HCT116 (cell line): ENCODE measurements at regions of chr20 and their contacts with region 1.

Region 1: GRCh38 chr20:17536944-17537444 is 5.8 kb upstream of the BFSP1 start:
- DNase-seq: peak; percentile 64
- ATAC-seq: peak; percentile 95
- H3K4me3 ChIP-seq: no peak overlapping the region
- H3K27ac ChIP-seq: no peak overlapping the region
- H3K4me1 ChIP-seq: peaks cover 34 to 41% of the 10 kb centered on the region in 2 experiments
- H3K27me3 ChIP-seq: no peaks in the 10 kb centered on the region
- CTCF ChIP-seq: peak; percentile 87 to 97 (median 97)
- POLR2A ChIP-seq: no peak
- RAD21 ChIP-seq: peak; percentile 99

Region 2: DNA sequence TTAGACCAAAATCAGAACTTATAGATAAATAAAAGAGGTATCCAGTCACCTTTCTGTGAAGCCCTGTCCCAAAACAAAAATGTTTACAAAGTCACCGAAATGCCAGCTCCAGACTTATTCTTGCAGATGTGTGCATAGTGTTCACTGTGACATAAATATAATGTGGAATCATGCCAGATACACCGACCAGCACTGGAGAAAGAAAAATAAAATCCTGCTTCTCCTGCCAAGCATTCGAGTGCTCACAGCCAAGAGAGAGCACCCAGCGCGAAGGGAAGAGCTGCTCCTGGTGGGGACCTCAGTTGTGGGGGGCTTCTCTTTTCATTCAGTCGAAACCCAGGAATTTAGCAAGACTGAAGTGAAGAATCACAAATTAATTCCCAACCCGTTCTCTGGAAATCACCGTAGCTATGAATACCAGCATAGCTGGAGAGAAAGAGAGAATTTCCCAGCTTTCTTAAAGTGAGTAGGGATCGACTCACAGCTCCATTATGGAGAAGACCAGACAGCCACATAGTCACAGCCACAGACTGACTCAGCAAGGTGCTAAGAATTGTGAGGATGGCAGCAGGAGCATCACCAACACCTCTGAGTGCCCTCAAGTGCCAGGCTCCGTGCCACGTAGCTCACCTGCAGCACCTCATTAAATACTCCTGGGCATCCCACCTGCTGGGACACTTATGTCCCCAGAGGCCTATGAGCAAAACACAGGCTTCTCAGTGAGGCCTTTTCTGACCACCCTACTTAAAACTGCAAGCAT is 39.0 kb before region 1 on chr20:
- CTCF ChIA-PET with region 1: no interaction called
- POLR2A ChIA-PET with region 1: no interaction called
- RAD21 ChIA-PET with region 1: no interaction called
- intact Hi-C with region 1: no loop called
- DNase-seq: no peak
- ATAC-seq: 0 out of 2 replicates have a peak, but pooled peaks have one; percentile 20
- H3K4me3 ChIP-seq: no peak overlapping the region
- H3K27ac ChIP-seq: no peak overlapping the region
- H3K4me1 ChIP-seq: no peaks in the 10 kb centered on the region
- H3K27me3 ChIP-seq: no peaks in the 10 kb centered on the region
- CTCF ChIP-seq: no peak
- POLR2A ChIP-seq: no peak
- RAD21 ChIP-seq: no peak

Region 3: GRCh38 chr20:17569616-17570346 is 32.8 kb after region 1 on chr20 and contains the start of gene DSTN:
- CTCF ChIA-PET with region 1: interaction called, 4 read pairs
- POLR2A ChIA-PET with region 1: interaction called, 6 read pairs
- RAD21 ChIA-PET with region 1: interaction called in 1 of 2 experiments, 4 read pairs
- intact Hi-C with region 1: loop called (anchors 1 kb)
- DNase-seq: peak; percentile 78
- ATAC-seq: peak; percentile 77
- H3K4me3 ChIP-seq: peak within 1 kb of the TSS; percentile 71 to 90
- H3K27ac ChIP-seq: peak within 1 kb of the TSS; percentile 98
- H3K4me1 ChIP-seq: peaks cover 37 to 53% of the 10 kb centered on the region in 2 experiments
- H3K27me3 ChIP-seq: no peaks in the 10 kb centered on the region
- CTCF ChIP-seq: no peak
- POLR2A ChIP-seq: peak; percentile 63
- RAD21 ChIP-seq: no peak
- total RNA-seq, gene DSTN: 202 TPM

Region 4: GRCh38 chr20:17611540-17612286 is 74.7 kb after region 1 on chr20:
- CTCF ChIA-PET with region 1: interaction called, 10 read pairs
- POLR2A ChIA-PET with region 1: no interaction called
- RAD21 ChIA-PET with region 1: no interaction called
- intact Hi-C with region 1: no loop called
- DNase-seq: peak; percentile 6
- ATAC-seq: peak; percentile 26
- H3K4me3 ChIP-seq: no peak overlapping the region
- H3K27ac ChIP-seq: peak overlapping the region; percentile 40; the same call in 1 of the 2 replicates
- H3K4me1 ChIP-seq: no peaks in the 10 kb centered on the region
- H3K27me3 ChIP-seq: no peaks in the 10 kb centered on the region
- CTCF ChIP-seq: peak; percentile 32 to 54 (median 48); a peak in 4 of 6 replicates
- POLR2A ChIP-seq: no peak
- RAD21 ChIP-seq: no peak; the same call in none of the 2 replicates

Region 5: DNA sequence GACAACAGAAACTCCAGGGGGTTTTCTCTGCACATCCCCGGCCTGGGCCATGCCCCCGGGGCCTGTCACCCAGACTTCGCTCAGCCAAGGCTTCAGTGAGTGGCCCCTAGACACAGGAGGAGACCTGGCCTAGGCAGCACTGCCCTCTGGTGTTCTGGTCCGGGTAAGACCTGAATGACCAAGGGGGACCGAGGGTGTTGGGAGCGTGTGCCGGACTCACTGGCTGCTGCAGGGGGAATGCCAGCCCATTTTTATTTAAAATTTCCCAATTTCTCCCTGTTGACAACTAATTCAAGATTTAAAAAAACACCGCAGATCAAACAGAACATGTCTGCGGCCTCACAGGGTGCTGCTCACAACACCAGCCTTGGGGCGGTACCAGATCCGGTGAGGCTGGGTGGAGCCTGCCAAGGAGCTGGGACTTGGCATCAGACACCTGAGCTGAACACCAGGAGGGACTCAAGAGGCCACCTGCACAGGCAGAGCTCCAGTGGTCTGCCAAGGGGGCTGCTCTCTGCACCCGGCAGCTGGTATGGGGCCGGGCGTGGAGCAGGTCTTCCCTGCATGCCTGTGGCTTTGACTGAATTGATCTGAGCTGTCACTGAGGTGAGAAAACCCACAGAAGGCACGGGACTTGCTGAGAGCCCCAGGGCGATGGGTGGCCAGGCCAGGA is 80.7 kb after region 1 on chr20:
- CTCF ChIA-PET with region 1: interaction called, 8 read pairs
- POLR2A ChIA-PET with region 1: no interaction called
- RAD21 ChIA-PET with region 1: no interaction called
- intact Hi-C with region 1: loop called (anchors 1 kb)
- DNase-seq: peak; percentile 18
- ATAC-seq: peak; percentile 80
- H3K4me3 ChIP-seq: no peak overlapping the region
- H3K27ac ChIP-seq: no peak overlapping the region
- H3K4me1 ChIP-seq: no peaks in the 10 kb centered on the region
- H3K27me3 ChIP-seq: no peaks in the 10 kb centered on the region
- CTCF ChIP-seq: peak; percentile 64 to 74 (median 68)
- POLR2A ChIP-seq: no peak
- RAD21 ChIP-seq: peak; percentile 84

Region 6: DNA sequence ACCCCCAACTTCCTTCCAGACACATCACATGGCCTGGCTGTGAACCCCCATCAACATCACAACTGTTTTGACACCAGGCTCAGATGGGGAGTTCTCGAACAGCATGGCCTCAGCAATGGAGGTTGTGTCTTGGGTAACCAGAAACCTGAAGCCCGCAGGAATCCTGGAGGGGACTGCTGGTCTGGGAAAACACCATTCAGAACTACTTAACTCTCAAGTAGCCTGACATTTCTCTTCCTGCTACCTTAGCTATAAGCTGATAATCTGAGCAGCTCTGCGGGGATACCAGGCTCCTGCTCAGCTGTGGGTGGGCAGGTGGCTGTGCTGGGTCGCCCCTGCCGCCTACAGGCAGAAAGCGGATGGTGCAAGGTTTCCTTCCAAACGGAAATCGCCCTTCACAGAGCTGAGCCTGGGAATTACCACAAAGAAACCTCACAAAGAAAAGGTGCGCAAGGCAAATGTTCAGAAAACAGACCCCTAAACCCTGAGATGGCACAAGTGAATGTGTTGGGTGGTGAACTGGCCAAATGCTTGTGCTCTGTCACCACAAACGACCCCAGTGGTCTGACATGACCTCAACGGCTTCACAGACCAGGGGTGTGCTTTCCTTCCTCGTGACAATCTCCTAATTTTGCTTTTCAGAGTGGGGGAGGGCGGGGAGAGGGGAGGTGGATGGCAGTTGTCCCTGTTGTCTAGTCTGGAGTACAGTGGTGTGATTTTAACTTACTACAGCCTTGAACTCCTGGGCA is 402.1 kb after region 1 on chr20:
- CTCF ChIA-PET with region 1: interaction called, 8 read pairs
- POLR2A ChIA-PET with region 1: no interaction called
- RAD21 ChIA-PET with region 1: interaction called in 1 of 2 experiments, 3 read pairs
- intact Hi-C with region 1: loop called (anchors 5 kb)
- DNase-seq: peak; percentile 22
- ATAC-seq: peak; percentile 85
- H3K4me3 ChIP-seq: no peak overlapping the region
- H3K27ac ChIP-seq: peak overlapping the region; percentile 24; the same call in 1 of the 2 replicates
- H3K4me1 ChIP-seq: peaks cover 0 to 11% of the 10 kb centered on the region in 2 experiments; a peak in 1 of 4 replicates
- H3K27me3 ChIP-seq: no peaks in the 10 kb centered on the region
- CTCF ChIP-seq: peak; percentile 66 to 95 (median 92); a peak in 5 of 6 replicates
- POLR2A ChIP-seq: no peak
- RAD21 ChIP-seq: peak; percentile 88

Region 7: DNA sequence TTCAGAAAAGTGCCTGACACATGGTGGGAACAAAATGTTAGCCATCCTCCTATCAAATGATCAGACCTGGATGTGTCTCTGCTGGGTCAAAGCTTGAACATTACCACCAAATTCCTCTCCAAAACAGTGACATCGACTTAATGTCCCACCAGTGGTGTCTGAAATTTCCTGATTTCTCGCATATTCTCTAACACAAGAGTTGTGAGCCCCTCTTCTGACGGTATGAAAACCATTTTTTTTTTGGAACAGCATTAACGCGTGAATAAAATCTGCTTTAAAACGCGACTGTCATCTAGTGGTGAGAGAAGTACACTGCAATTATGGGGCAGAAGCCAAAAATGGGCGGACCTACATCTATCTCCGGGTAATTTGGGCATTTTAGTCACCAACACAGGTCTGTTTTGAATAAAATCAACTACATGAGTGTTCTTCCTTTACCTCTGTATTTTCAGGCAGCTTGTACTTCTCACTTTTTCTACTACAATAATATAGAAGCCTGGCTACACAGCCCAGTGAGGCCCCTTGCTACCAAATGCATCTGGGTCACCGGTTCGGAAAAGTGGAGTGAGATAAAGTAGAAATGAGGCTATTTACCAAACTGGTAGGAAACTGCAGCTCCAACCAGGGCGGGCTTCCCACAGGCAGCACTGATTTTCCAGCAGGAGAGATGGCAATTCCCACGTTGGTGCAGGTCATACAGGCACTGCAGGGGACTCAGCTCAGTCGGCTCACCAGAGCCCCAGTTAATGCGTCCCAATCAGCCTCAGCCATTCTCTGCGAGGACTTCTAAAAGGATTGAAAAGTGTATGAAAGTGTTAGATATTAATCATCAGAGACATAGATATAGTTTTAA is 459.2 kb after region 1 on chr20:
- CTCF ChIA-PET with region 1: no interaction called
- POLR2A ChIA-PET with region 1: no interaction called
- RAD21 ChIA-PET with region 1: no interaction called
- intact Hi-C with region 1: loop called (anchors 10 kb)
- DNase-seq: peak; percentile 26
- ATAC-seq: peak; percentile 76
- H3K4me3 ChIP-seq: no peak overlapping the region
- H3K27ac ChIP-seq: no peak overlapping the region
- H3K4me1 ChIP-seq: peaks cover 0 to 6% of the 10 kb centered on the region in 2 experiments; a peak in 2 of 4 replicates
- H3K27me3 ChIP-seq: no peaks in the 10 kb centered on the region
- CTCF ChIP-seq: peak; percentile 81 to 96 (median 92)
- POLR2A ChIP-seq: no peak
- RAD21 ChIP-seq: peak; percentile 85

Region 8: DNA sequence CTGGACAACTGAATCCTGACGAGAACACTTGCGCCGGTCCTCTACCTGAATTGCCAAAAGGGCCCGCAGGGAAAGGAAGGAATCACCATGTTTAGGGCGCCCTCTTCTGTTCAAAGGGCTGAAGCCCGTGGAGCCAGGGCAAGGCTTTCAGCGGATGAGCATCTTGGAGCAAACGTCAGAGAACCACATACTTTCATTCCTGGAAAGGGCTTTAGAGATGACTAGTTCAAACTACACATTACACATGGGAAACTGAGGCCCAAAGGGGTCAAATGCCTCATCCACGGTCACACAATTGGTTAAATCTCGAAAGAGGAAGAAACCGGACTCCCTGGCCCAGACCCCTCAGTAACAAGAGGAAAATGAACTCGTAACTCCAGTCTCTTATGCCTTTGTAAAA is 739.8 kb after region 1 on chr20:
- CTCF ChIA-PET with region 1: no interaction called
- POLR2A ChIA-PET with region 1: no interaction called
- RAD21 ChIA-PET with region 1: no interaction called
- intact Hi-C with region 1: no loop called
- DNase-seq: peak; percentile 67
- ATAC-seq: peak; percentile 98
- H3K4me3 ChIP-seq: no peak overlapping the region
- H3K27ac ChIP-seq: no peak overlapping the region
- H3K4me1 ChIP-seq: 0 out of 4 replicates have a peak, but pooled peaks cover 0 to 4% of the 10 kb centered on the region in 2 experiments
- H3K27me3 ChIP-seq: no peaks in the 10 kb centered on the region
- CTCF ChIP-seq: peak; percentile 77 to 89 (median 87); a peak in 5 of 6 replicates
- POLR2A ChIP-seq: no peak
- RAD21 ChIP-seq: peak; percentile 94